CD8-positive, alpha-beta T cell (primary cell): ENCODE measurements at regions of chr7 and their contacts with region 1.

Region 1: DNA sequence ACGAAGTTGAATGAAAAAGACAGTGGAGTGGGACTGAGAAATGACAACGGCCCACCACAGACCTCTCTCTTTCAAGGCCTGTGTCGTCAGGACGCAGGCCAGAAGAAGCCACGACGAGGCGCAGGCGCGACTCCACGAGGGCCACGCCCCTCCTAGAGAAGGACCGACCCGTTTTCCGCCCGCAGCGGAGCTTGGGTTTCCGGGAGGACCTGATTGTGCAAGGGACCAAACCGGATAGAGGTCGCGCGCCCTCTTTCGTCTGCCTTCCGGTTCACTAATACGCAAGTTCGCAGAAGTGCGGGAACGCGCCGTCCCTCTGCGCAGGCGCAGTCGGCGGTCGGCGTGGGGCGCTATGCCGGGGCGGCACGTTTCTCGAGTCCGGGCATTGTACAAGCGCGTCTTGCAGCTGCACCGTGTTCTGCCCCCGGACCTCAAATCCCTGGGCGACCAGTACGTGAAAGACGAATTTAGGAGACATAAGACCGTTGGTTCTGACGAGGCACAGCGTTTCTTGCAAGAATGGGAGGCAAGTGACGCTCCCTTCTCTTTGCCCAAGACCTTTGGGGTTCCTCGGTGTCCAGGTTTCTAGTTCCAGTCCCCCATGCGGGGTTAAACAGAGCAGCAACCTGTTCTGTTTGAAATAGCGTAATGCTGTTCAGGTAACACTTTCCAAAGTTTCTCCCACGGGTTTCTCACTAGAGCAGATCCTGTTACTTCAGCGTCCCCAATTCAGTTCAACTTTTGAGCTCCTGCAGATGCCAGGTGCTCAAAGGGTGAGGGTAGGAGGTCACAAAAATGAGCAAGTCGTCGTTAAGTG is at the start of gene SDHAF3:
- DNase-seq: peak; percentile 97 to 99 (median 98)
- ATAC-seq: peak; percentile 94
- H3K4me3 ChIP-seq: peak within 1 kb of the TSS; percentile 70 to 87
- H3K4me3 Mint-ChIP-seq: peak within 1 kb of the TSS; percentile 97
- H3K27ac ChIP-seq: peak within 1 kb of the TSS; percentile 66 to 83
- H3K27ac Mint-ChIP-seq: peak within 1 kb of the TSS; percentile 96
- H3K4me1 ChIP-seq: peaks cover 15% of the 10 kb centered on the region
- H3K4me1 Mint-ChIP-seq: peaks cover 46% of the 10 kb centered on the region
- H3K27me3 ChIP-seq: no peaks in the 10 kb centered on the region
- H3K27me3 Mint-ChIP-seq: peaks cover 1% of the 10 kb centered on the region
- CTCF ChIP-seq: no peak
- total RNA-seq, gene SDHAF3: 3.5 to 4.6 TPM

Region 2: GRCh38 chr7:96701258-96701657 is 416.3 kb before region 1 on chr7:
- CTCF ChIA-PET with region 1: no interaction called
- POLR2A ChIA-PET with region 1: no interaction called
- intact Hi-C with region 1: loop called in 1 of 2 experiments (anchors 5 kb)
- DNase-seq: no peak
- ATAC-seq: no peak
- H3K4me3 ChIP-seq: no peak overlapping the region
- H3K4me3 Mint-ChIP-seq: no peak overlapping the region
- H3K27ac ChIP-seq: no peak overlapping the region
- H3K27ac Mint-ChIP-seq: no peak overlapping the region
- H3K4me1 ChIP-seq: peaks cover 22% of the 10 kb centered on the region
- H3K4me1 Mint-ChIP-seq: peaks cover 86% of the 10 kb centered on the region
- H3K27me3 ChIP-seq: no peaks in the 10 kb centered on the region
- H3K27me3 Mint-ChIP-seq: no peaks in the 10 kb centered on the region
- CTCF ChIP-seq: no peak

Region 3: GRCh38 chr7:97104719-97105238 is 12.8 kb before region 1 on chr7:
- CTCF ChIA-PET with region 1: interaction called, 10 read pairs
- POLR2A ChIA-PET with region 1: interaction called, 3 read pairs
- intact Hi-C with region 1: no loop called
- DNase-seq: peak; percentile 25 to 71 (median 64)
- ATAC-seq: peak; percentile 51
- H3K4me3 ChIP-seq: no peak overlapping the region
- H3K4me3 Mint-ChIP-seq: no peak overlapping the region
- H3K27ac ChIP-seq: no peak overlapping the region
- H3K27ac Mint-ChIP-seq: no peak overlapping the region
- H3K4me1 ChIP-seq: no peaks in the 10 kb centered on the region
- H3K4me1 Mint-ChIP-seq: no peaks in the 10 kb centered on the region
- H3K27me3 ChIP-seq: no peaks in the 10 kb centered on the region
- H3K27me3 Mint-ChIP-seq: peaks cover 32% of the 10 kb centered on the region
- CTCF ChIP-seq: peak; percentile 28

Region 4: DNA sequence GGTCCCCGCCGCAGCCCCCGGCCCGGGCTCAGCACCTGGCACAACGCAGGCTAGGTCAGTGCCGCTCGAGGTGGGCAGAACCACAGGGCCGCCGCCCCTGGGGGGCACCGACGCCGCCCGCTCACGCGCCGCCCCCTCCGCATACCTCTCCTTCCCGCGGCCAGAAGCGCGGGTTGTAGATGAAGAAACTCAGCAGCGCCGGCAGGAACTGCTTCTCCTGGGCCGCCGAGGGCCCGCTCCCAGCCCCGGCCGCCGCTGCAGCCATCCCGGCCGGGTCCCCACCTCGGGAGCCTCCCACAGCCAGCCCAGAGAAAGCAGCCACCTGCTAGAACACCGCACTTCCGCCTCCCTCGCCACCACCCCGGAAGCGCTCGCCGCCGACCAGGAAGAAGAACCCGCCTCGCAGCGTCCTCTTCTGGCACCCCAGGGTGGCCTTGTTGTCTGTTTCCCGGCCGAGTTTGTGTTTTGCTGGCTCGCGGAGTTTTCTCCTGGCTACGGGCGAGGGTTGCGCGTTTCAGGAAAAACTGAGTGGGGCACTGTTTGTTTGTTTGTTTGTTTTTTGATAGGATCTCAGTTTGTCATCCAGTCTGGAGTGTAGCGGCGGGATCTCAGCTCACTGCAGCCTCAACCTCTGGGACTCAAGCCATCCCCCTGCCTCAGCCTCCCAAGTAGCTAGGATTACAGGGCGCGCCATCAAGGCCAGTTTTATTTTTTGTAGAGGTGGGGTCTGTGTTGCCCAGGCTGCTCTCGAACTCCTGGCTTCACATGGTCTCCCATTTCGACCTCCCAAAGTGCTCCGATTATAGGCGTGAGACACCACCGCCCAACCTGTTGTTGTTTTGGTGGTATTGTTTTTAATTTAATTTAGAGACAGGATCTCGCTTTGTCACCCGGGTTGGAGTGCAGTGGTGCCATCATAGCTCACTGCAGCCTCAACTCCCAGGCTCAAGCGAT is 854.7 kb after region 1 on chr7:
- CTCF ChIA-PET with region 1: no interaction called
- POLR2A ChIA-PET with region 1: no interaction called
- intact Hi-C with region 1: loop called (anchors 5 kb)
- DNase-seq: peak; percentile 65 to 90 (median 84)
- ATAC-seq: peak; percentile 94
- H3K4me3 ChIP-seq: peak overlapping the region; percentile 81 to 84
- H3K4me3 Mint-ChIP-seq: peak overlapping the region; percentile 89
- H3K27ac ChIP-seq: peak overlapping the region; percentile 61 to 72
- H3K27ac Mint-ChIP-seq: peak overlapping the region; percentile 93
- H3K4me1 ChIP-seq: peaks cover 10% of the 10 kb centered on the region
- H3K4me1 Mint-ChIP-seq: peaks cover 22% of the 10 kb centered on the region
- H3K27me3 ChIP-seq: no peaks in the 10 kb centered on the region
- H3K27me3 Mint-ChIP-seq: no peaks in the 10 kb centered on the region
- CTCF ChIP-seq: peak; percentile 32

Region 5: DNA sequence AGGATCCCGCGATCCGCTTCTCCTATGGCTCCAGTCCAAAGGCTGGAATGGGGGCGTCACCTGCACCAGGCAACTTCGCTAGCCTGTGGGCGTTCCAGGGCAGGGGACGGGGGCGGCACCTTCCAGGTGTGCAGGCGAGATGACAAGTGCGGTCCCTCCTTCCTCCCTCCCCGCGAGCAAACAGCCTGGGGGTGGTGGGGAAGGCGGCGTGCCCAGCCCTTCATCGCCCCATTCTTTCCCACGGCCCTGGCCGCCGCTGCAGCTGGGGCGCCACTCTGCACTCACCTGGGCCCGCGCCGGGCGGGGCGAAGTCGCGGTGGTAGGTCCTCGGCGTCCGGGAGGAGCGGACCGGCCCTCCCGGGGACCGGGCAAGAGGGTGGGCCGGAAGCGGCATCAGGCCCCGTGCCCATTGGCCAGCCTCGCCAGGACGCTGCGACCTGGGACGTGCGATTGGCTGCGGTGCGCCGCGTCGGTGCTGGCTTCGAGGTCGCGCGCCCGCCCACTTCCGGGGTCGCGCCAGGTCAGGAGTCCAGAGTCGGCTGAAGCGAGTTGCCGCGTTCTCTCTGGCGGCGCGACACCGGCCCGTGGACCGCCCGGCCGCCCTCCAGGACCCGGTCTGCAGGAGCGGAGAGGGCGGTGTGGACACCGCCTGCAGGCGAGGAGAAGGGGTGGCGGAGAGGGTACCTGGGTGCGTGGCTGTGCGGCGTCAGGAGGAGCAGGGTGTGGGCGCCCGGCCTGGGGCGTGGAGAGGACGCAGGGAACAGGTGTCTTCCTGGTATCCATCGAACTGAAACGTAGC is 1134.5 kb after region 1 on chr7 and contains the start of gene TECPR1:
- CTCF ChIA-PET with region 1: no interaction called
- POLR2A ChIA-PET with region 1: interaction called, 3 read pairs
- intact Hi-C with region 1: loop called in 1 of 2 experiments (anchors 2 kb)
- DNase-seq: peak; percentile 66 to 94 (median 87)
- ATAC-seq: peak; percentile 68
- H3K4me3 ChIP-seq: peak within 1 kb of the TSS; percentile 78 to 86
- H3K4me3 Mint-ChIP-seq: peak within 1 kb of the TSS; percentile 94
- H3K27ac ChIP-seq: peak within 1 kb of the TSS; percentile 84 to 87
- H3K27ac Mint-ChIP-seq: peak within 1 kb of the TSS; percentile 99
- H3K4me1 ChIP-seq: peaks cover 47% of the 10 kb centered on the region
- H3K4me1 Mint-ChIP-seq: peaks cover 54% of the 10 kb centered on the region
- H3K27me3 ChIP-seq: no peaks in the 10 kb centered on the region
- H3K27me3 Mint-ChIP-seq: no peaks in the 10 kb centered on the region
- CTCF ChIP-seq: peak; percentile 22
- total RNA-seq, gene TECPR1: 64.4 to 68.2 TPM

Region 6: GRCh38 chr7:98878365-98879165 is 1761.0 kb after region 1 on chr7 and contains the start of gene TRRAP:
- CTCF ChIA-PET with region 1: no interaction called
- POLR2A ChIA-PET with region 1: no interaction called
- intact Hi-C with region 1: loop called in 1 of 2 experiments (anchors 10 kb)
- DNase-seq: peak; percentile 56 to 87 (median 73)
- ATAC-seq: peak; percentile 63
- H3K4me3 ChIP-seq: peak within 1 kb of the TSS; percentile 82 to 92
- H3K4me3 Mint-ChIP-seq: peak within 1 kb of the TSS; percentile 98
- H3K27ac ChIP-seq: peak within 1 kb of the TSS; percentile 77 to 82
- H3K27ac Mint-ChIP-seq: peak within 1 kb of the TSS; percentile 96
- H3K4me1 ChIP-seq: peaks cover 16% of the 10 kb centered on the region
- H3K4me1 Mint-ChIP-seq: peaks cover 24% of the 10 kb centered on the region
- H3K27me3 ChIP-seq: no peaks in the 10 kb centered on the region
- H3K27me3 Mint-ChIP-seq: peaks cover 2% of the 10 kb centered on the region
- CTCF ChIP-seq: peak; percentile 94
- total RNA-seq, gene TRRAP: 39.8 to 43.0 TPM